Heart left ventricle (tissue), 16 donors: ENCODE measurements at regions of chr10 and their contacts with region 1.

Region 1: GRCh38 chr10:44801383-44802327 is 109.5 kb upstream of the TMEM72 start:
- DNase-seq: peak; percentile 90 to 95 (median 94)
- ATAC-seq: peak; percentile 90 to 95 (median 93)
- H3K4me3 ChIP-seq: no peak overlapping the region
- H3K27ac ChIP-seq: peak overlapping the region in 7 of 12 donors; percentile 12 to 68 (median 45)
- H3K4me1 ChIP-seq: peaks cover 0 to 43% (median 21%) of the 10 kb centered on the region in 12 donors
- H3K27me3 ChIP-seq: no peaks in the 10 kb centered on the region
- CTCF ChIP-seq: no peak
- POLR2A ChIP-seq: no peak

Region 2: DNA sequence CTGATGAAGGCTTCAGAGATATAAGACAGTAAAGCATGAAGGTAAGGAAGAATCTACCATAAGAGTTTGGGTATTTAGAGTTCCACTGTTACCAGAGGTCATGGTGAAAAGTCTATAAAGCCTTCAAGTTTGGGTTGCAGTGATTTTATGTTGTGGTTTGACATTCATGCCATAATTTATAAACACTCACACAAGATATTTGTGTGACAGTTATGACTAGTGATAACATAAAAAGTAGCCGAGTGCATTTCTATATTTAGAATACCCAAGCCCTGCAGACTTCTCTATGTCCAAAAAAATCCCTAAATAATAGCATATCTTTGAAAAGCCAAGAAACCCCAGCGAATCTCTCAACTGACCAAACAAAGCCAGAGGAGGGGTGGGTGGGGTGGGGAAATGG is 646.7 kb before region 1 on chr10:
- intact Hi-C with region 1: loop called in 1 of 10 experiments (anchors 5 kb)
- DNase-seq: no peak
- ATAC-seq: peak in 1 of 4 donors; percentile 50
- H3K4me3 ChIP-seq: no peak overlapping the region
- H3K27ac ChIP-seq: peak overlapping the region in 4 of 12 donors; percentile 0 to 26 (median 14)
- H3K4me1 ChIP-seq: peaks cover 0 to 12% (median 1%) of the 10 kb centered on the region in 12 donors
- H3K27me3 ChIP-seq: no peaks in the 10 kb centered on the region
- CTCF ChIP-seq: no peak
- POLR2A ChIP-seq: no peak

Region 3: GRCh38 chr10:44845361-44846175 is 43.9 kb after region 1 on chr10:
- intact Hi-C with region 1: no loop called
- DNase-seq: no peak
- ATAC-seq: no peak
- H3K4me3 ChIP-seq: no peak overlapping the region
- H3K27ac ChIP-seq: no peak overlapping the region
- H3K4me1 ChIP-seq: no peaks in the 10 kb centered on the region
- H3K27me3 ChIP-seq: no peaks in the 10 kb centered on the region
- CTCF ChIP-seq: no peak
- POLR2A ChIP-seq: no peak